ENCODE measurements at regions of chr1 and their contacts with region 1.

Region 1: GRCh38 chr1:54934869-54935268 is 45.6 kb upstream of the TMEM61 start:
- DNase-seq: peak; percentile 37
- H3K4me3 ChIP-seq: no peak overlapping the region
- H3K27ac ChIP-seq: no peak overlapping the region
- H3K4me1 ChIP-seq: peaks cover 2% of the 10 kb centered on the region
- H3K27me3 ChIP-seq: peaks cover 2 to 10% of the 10 kb centered on the region in 2 experiments
- CTCF ChIP-seq: no peak
- POLR2A ChIP-seq: no peak

Region 2: GRCh38 chr1:54591127-54591756 is 343.6 kb before region 1 on chr1:
- CTCF ChIA-PET with region 1: no interaction called
- POLR2A ChIA-PET with region 1: no interaction called
- dilution Hi-C with region 1: no loop called
- intact Hi-C with region 1: no loop called
- DNase-seq: no peak
- H3K4me3 ChIP-seq: no peak overlapping the region
- H3K27ac ChIP-seq: no peak overlapping the region
- H3K4me1 ChIP-seq: no peaks in the 10 kb centered on the region
- H3K27me3 ChIP-seq: no peaks in the 10 kb centered on the region
- CTCF ChIP-seq: no peak
- POLR2A ChIP-seq: no peak

Region 3: GRCh38 chr1:54800899-54801759 is 133.7 kb before region 1 on chr1 and contains the start of gene TTC22:
- CTCF ChIA-PET with region 1: no interaction called
- POLR2A ChIA-PET with region 1: no interaction called
- dilution Hi-C with region 1: no loop called
- intact Hi-C with region 1: no loop called
- DNase-seq: no peak
- H3K4me3 ChIP-seq: no peak within 1 kb of the TSS
- H3K27ac ChIP-seq: no peak within 1 kb of the TSS
- H3K4me1 ChIP-seq: peaks cover 4% of the 10 kb centered on the region
- H3K27me3 ChIP-seq: peaks cover 28 to 31% of the 10 kb centered on the region in 2 experiments
- CTCF ChIP-seq: peak in 1 of 2 donors; percentile 30
- POLR2A ChIP-seq: no peak
- total RNA-seq, gene TTC22: not detected in 2 replicates

Region 4: DNA sequence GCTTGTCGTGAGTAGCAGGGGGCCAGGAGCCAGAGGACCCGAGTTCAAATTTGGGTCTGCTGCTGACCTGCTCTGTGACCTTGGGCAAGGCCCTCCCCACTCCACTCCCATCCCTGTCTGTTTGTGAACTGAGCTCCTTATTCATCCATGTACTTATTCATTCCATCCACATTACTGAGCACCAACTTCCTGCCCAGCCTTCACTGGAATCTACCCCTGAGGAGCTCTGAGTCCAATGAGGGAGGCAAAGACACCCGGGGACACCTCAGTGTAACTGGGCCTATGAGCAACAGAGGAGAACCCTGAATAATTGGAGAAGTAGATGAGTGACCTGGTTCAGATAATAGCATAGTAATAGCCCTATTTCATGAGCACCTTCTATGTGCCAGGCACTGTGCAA is 72.8 kb after region 1 on chr1:
- CTCF ChIA-PET with region 1: interaction called, 3 read pairs
- POLR2A ChIA-PET with region 1: no interaction called
- dilution Hi-C with region 1: loop called (anchors 10 kb)
- intact Hi-C with region 1: no loop called
- DNase-seq: no peak
- H3K4me3 ChIP-seq: no peak overlapping the region
- H3K27ac ChIP-seq: no peak overlapping the region
- H3K4me1 ChIP-seq: no peaks in the 10 kb centered on the region
- H3K27me3 ChIP-seq: no peaks in the 10 kb centered on the region
- CTCF ChIP-seq: no peak
- POLR2A ChIP-seq: no peak

Measured in endothelial cell of umbilical vein (primary cell).